ENCODE measurements at regions of chr3 and their contacts with region 1.

Region 1: DNA sequence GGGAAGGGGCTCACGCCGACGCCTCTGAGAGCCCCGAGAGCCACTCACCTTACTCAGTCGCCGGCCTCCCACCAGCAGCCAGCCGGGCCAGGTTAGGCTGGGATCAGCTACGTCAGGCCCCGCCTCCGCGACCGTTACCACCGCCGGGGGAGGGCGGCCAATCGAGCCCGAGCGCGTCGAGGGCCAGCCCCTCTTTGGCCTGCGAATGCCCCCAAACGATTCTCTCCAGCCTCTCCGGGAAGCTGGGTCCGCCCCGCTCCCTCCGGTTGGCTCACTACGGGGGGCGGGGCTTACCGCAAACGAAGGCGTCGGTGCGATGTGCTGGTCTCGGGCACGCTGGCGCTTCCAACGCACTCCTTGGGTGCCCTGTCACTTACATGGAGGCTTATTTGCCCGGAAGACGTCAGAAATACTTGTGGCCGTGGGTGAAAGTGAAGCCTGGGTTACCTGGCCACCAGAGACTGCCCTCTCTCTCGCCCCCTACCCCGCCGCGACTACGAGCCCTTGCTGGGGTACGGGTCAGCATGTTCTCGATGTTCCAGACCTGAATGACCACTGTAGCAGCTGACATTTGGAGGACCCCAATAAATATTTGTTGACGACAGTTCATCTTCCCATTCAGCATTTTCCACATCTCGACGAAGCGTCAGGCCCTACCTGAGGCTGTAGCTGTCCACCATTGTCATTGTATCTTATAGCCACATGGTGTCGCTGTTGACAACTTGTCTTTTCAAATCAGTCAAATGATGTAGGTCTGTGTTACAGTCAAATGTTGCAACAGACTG is at the start of gene CEP70:
- DNase-seq: peak; percentile 92
- H3K4me3 Mint-ChIP-seq: peak within 1 kb of the TSS; percentile 81
- H3K27ac Mint-ChIP-seq: peak within 1 kb of the TSS; percentile 86
- H3K4me1 Mint-ChIP-seq: peaks cover 3% of the 10 kb centered on the region
- H3K27me3 Mint-ChIP-seq: no peaks in the 10 kb centered on the region
- total RNA-seq, gene CEP70: 8.3 to 8.4 TPM

Region 2: GRCh38 chr3:138186803-138187295 is 407.5 kb before region 1 on chr3:
- CTCF ChIA-PET with region 1: interaction called, 4 read pairs
- POLR2A ChIA-PET with region 1: no interaction called
- intact Hi-C with region 1: loop called (anchors 5 kb)
- DNase-seq: peak; percentile 94
- H3K4me3 Mint-ChIP-seq: peak overlapping the region; percentile 91
- H3K27ac Mint-ChIP-seq: peak overlapping the region; percentile 93
- H3K4me1 Mint-ChIP-seq: peaks cover 35% of the 10 kb centered on the region
- H3K27me3 Mint-ChIP-seq: peaks cover 7% of the 10 kb centered on the region

Region 3: GRCh38 chr3:138479438-138479863 is 114.9 kb before region 1 on chr3:
- CTCF ChIA-PET with region 1: interaction called, 4 read pairs
- POLR2A ChIA-PET with region 1: no interaction called
- intact Hi-C with region 1: loop called (anchors 2 kb)
- DNase-seq: peak; percentile 54
- H3K4me3 Mint-ChIP-seq: no peak overlapping the region
- H3K27ac Mint-ChIP-seq: no peak overlapping the region
- H3K4me1 Mint-ChIP-seq: no peaks in the 10 kb centered on the region
- H3K27me3 Mint-ChIP-seq: peaks cover 5% of the 10 kb centered on the region

Region 4: DNA sequence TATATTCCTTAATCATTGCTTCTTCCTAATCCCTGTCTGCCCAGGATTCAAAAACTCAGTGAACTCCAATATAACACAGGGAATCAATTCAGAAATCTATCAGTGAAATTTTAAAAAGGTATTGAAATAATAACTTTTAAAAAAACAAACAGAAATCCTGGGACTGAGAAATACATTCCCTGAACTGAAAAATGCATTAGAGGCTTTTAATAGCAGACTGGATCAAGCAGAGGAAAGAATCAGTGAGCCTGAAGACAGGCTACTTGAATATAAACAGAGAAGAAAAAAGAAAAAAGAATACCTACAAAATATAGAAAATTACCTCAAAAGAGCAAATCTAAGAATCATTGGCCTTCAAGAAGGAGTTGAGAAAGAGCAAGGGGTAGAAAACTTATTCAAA is 55.0 kb before region 1 on chr3:
- CTCF ChIA-PET with region 1: no interaction called
- POLR2A ChIA-PET with region 1: no interaction called
- intact Hi-C with region 1: no loop called
- DNase-seq: no peak
- H3K4me3 Mint-ChIP-seq: no peak overlapping the region
- H3K27ac Mint-ChIP-seq: no peak overlapping the region
- H3K4me1 Mint-ChIP-seq: no peaks in the 10 kb centered on the region
- H3K27me3 Mint-ChIP-seq: no peaks in the 10 kb centered on the region

Region 5: DNA sequence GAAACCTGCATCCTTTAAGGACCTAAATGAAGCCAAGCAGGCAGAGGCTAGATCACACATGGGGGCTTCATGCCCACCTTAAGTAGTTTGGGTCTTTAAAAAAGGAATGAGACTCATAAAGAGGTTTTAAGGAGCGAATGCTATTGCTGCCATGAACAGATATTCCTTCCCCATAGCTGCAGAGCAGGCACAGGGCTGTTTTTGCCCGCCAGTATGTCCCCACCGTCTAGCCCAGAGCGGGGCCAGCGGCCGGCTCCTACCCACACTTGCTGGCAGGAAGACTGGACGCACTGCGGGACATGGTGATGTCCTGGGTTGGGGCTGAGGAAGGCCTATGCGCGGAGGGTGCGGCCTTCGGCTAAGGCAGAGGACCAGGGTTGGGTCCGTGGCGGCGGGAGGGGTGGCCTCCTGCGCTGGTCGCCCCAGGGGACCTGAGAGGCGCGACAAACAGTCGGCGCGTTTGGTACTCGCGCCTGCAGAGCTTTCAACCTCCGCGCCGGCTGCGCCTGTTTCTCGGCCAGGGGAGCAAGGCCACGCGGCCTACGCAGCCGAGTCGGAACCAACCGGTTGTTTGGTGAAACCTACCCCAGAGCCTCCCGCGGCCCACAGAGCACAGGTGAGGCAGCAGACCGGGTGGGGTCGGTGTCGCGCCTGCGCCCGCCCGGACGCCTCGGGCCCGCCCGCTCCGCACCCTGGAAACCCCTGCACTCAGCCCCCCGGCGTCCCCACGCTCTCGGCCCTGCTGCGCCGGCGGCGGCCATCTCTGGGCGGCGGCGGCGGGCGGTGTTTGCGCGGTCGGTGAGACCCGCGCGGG is 14.2 kb after region 1 on chr3 and contains the start of gene FAIM:
- CTCF ChIA-PET with region 1: interaction called, 8 read pairs
- POLR2A ChIA-PET with region 1: interaction called, 3 read pairs
- intact Hi-C with region 1: loop called (anchors 1 kb)
- DNase-seq: peak; percentile 73
- H3K4me3 Mint-ChIP-seq: peak within 1 kb of the TSS; percentile 77
- H3K27ac Mint-ChIP-seq: peak within 1 kb of the TSS; percentile 84
- H3K4me1 Mint-ChIP-seq: peaks cover 12% of the 10 kb centered on the region
- H3K27me3 Mint-ChIP-seq: peaks cover 1% of the 10 kb centered on the region
- total RNA-seq, gene FAIM: 3.7 to 4.0 TPM

Region 6: GRCh38 chr3:138834359-138835212 is 240.2 kb after region 1 on chr3 and contains the start of gene PIK3CB:
- CTCF ChIA-PET with region 1: interaction called, 3 read pairs
- POLR2A ChIA-PET with region 1: no interaction called
- intact Hi-C with region 1: loop called (anchors 1 kb)
- DNase-seq: peak; percentile 90
- H3K4me3 Mint-ChIP-seq: peak within 1 kb of the TSS; percentile 93
- H3K27ac Mint-ChIP-seq: peak within 1 kb of the TSS; percentile 97
- H3K4me1 Mint-ChIP-seq: peaks cover 28% of the 10 kb centered on the region
- H3K27me3 Mint-ChIP-seq: no peaks in the 10 kb centered on the region
- total RNA-seq, gene PIK3CB: 23.0 to 24.8 TPM

Region 7: GRCh38 chr3:139329345-139329850 is 735.1 kb after region 1 on chr3:
- CTCF ChIA-PET with region 1: no interaction called
- POLR2A ChIA-PET with region 1: no interaction called
- intact Hi-C with region 1: loop called (anchors 10 kb)
- DNase-seq: peak; percentile 93
- H3K4me3 Mint-ChIP-seq: peak overlapping the region; percentile 41
- H3K27ac Mint-ChIP-seq: no peak overlapping the region
- H3K4me1 Mint-ChIP-seq: peaks cover 3% of the 10 kb centered on the region
- H3K27me3 Mint-ChIP-seq: peaks cover 23% of the 10 kb centered on the region